PC-3 (cell line): ENCODE measurements at regions of chr3 and their contacts with region 1.

Region 1: GRCh38 chr3:83890039-83890762 is 1068.6 kb upstream of the CADM2 start:
- DNase-seq: peak; percentile 85
- ATAC-seq: peak; percentile 74
- H3K4me3 ChIP-seq: no peak overlapping the region
- H3K27ac ChIP-seq: peak overlapping the region; percentile 97
- H3K4me1 ChIP-seq: peaks cover 53% of the 10 kb centered on the region
- H3K27me3 ChIP-seq: no peaks in the 10 kb centered on the region
- CTCF ChIP-seq: no peak

Region 2: GRCh38 chr3:84023842-84024241 is 133.6 kb after region 1 on chr3:
- CTCF ChIA-PET with region 1: no interaction called
- POLR2A ChIA-PET with region 1: no interaction called
- intact Hi-C with region 1: loop called (anchors 5 kb)
- DNase-seq: peak; percentile 60
- ATAC-seq: peak; percentile 98
- H3K4me3 ChIP-seq: no peak overlapping the region
- H3K27ac ChIP-seq: no peak overlapping the region
- H3K4me1 ChIP-seq: peaks cover 6% of the 10 kb centered on the region; the same call in 1 of the 2 replicates
- H3K27me3 ChIP-seq: no peaks in the 10 kb centered on the region
- CTCF ChIP-seq: no peak